Activated T-helper 2 cell treated with anti-CD3 and anti-CD28 coated beads, Interferon-gamma antibody, Interleukin-2, Interleukin-4, amounts not matched to agents 10 μg/mL and 5 μg/mL and 100 μg/mL, durations not matched to agents 14 hours and 24 hours and 36 hours (primary cell): ENCODE measurements at regions of chr10 and their contacts with region 1.

Region 1: GRCh38 chr10:112532189-112532588 is 85.2 kb downstream of the VTI1A start:
- DNase-seq: no peak
- H3K4me3 Mint-ChIP-seq: peak overlapping the region; percentile 8
- H3K27ac Mint-ChIP-seq: no peak overlapping the region
- H3K4me1 Mint-ChIP-seq: peaks cover 36% of the 10 kb centered on the region
- H3K27me3 Mint-ChIP-seq: peaks cover 13% of the 10 kb centered on the region

Region 2: DNA sequence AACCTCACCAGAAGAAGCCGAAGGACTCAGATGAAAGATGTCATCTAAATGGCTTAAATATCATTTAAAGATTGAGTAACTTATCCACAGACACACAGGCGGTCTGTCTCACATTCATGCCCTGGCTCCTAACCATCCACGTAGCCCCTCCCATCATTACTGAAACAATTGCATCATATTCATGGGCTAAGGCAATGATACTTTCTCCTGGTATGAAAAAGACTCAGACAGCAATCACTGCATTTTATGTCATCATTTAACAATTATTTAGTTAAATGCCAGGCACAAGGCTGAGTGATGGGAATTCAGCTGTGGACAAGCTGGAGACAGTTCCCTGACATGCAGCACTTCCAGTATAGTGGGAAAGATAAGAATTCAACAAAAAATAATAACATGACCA is 260.2 kb before region 1 on chr10:
- intact Hi-C with region 1: no loop called
- DNase-seq: no peak
- H3K4me3 Mint-ChIP-seq: no peak overlapping the region
- H3K27ac Mint-ChIP-seq: no peak overlapping the region
- H3K4me1 Mint-ChIP-seq: no peaks in the 10 kb centered on the region
- H3K27me3 Mint-ChIP-seq: peaks cover 3% of the 10 kb centered on the region

Region 3: DNA sequence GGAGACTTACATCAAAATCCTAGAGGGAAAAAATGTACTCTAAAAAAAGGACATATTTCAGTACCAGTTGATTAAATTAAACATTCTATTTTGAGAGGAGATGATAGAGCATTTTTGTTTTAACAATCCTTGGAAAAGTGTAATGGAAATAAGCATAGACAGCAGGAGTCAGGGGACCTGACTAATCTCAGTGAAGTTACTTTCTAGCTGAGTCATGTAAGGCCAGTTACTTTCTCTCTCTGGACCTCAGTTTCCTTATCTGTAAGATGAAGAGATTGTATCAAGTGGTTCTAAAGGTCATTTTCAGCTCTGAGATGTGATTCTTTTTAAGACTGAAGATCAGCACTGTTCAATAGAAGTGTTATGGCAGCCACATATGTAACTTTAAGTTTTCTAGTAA is 41.0 kb before region 1 on chr10:
- intact Hi-C with region 1: loop called (anchors 1 kb)
- DNase-seq: no peak
- H3K4me3 Mint-ChIP-seq: no peak overlapping the region
- H3K27ac Mint-ChIP-seq: no peak overlapping the region
- H3K4me1 Mint-ChIP-seq: peaks cover 6% of the 10 kb centered on the region
- H3K27me3 Mint-ChIP-seq: peaks cover 9% of the 10 kb centered on the region

Region 4: GRCh38 chr10:112981553-112981952 is 449.4 kb after region 1 on chr10:
- intact Hi-C with region 1: loop called (anchors 5 kb)
- DNase-seq: peak; percentile 10
- H3K4me3 Mint-ChIP-seq: no peak overlapping the region
- H3K27ac Mint-ChIP-seq: no peak overlapping the region
- H3K4me1 Mint-ChIP-seq: peaks cover 12% of the 10 kb centered on the region
- H3K27me3 Mint-ChIP-seq: peaks cover 66% of the 10 kb centered on the region